ENCODE measurements at regions of chr18 and their contacts with region 1.

Region 1: DNA sequence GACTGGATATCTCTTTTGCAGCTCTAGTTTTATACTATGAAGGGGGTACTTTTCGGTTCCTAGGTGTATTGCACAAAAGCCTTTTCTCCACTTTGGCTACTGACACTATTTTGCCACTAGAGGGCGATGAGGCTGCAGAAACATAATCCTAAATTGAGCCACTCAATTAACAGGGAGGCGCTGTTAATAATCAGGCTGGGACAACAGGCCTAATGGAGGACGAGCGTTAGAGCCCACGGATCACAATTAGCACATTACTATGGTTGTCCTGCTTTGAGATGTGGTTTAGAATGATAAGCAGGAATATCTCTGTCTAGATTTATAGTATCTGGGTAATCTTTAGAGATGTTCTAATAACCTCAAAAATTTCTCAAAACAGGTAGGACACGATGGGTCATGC is 62.2 kb upstream of the PMAIP1 start:
- DNase-seq: peak; percentile 84
- H3K4me3 Mint-ChIP-seq: no peak overlapping the region
- H3K27ac Mint-ChIP-seq: no peak overlapping the region
- H3K4me1 Mint-ChIP-seq: peaks cover 6% of the 10 kb centered on the region
- H3K27me3 Mint-ChIP-seq: peaks cover 16% of the 10 kb centered on the region

Region 2: DNA sequence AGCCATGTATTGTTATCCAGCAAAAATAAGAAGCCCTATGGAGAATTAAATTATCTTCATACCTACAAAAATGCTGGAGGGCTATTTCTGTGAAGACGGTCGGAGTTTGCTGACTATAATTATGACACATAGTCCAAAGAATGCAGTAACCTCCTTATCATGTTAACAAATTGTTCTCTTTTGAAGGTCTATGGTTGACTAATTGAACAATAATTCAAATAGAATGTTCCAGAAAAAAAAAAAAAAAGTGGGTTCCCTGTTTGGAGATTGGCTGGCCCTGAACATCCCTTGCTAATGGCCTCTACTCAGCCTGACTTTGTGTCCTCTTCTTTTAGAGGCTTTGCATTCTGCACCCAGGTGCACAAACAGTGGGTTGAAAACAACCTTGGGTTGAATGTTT is 57.6 kb before region 1 on chr18:
- intact Hi-C with region 1: no loop called
- DNase-seq: no peak
- H3K4me3 Mint-ChIP-seq: no peak overlapping the region
- H3K27ac Mint-ChIP-seq: no peak overlapping the region
- H3K4me1 Mint-ChIP-seq: no peaks in the 10 kb centered on the region
- H3K27me3 Mint-ChIP-seq: peaks cover 2% of the 10 kb centered on the region

Region 3: GRCh38 chr18:59861963-59862819 is 24.6 kb after region 1 on chr18:
- intact Hi-C with region 1: no loop called
- DNase-seq: no peak
- H3K4me3 Mint-ChIP-seq: no peak overlapping the region
- H3K27ac Mint-ChIP-seq: no peak overlapping the region
- H3K4me1 Mint-ChIP-seq: no peaks in the 10 kb centered on the region
- H3K27me3 Mint-ChIP-seq: peaks cover 3% of the 10 kb centered on the region

Region 4: DNA sequence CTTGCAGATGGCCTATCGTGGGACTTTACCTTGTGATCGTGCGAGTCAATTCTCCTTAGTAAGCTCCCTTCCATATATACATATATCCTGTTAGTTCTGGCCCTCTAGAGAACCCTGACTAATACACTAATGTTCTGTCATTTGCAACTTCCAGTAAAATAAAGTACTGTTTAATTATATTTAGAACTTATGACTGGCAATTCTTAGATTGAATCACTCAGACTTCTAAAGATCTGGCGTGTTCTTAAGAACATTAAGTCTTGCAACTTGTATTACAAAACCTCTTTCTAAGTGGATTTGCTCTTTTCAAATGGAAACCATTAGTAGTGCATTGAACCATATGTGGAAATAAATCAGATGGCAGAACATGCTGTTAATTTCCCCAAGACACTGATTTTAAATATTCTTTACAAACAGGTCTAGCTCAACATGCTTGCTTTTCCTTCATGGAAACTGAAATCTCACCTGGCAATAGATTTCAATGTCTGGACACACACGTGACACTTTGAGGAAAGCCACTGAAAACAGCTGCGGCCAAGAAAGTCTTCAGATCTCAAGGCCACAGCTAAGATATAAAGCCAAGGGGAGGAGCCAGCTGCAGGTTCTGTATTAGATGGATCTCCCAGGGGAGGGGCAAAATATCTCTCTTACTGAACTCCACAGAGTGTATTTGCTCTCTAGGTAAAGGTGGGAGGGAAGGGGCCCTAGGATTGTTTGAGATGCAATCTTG is 112.8 kb after region 1 on chr18:
- intact Hi-C with region 1: loop called (anchors 5 kb)
- DNase-seq: no peak
- H3K4me3 Mint-ChIP-seq: no peak overlapping the region
- H3K27ac Mint-ChIP-seq: no peak overlapping the region
- H3K4me1 Mint-ChIP-seq: peaks cover 13% of the 10 kb centered on the region
- H3K27me3 Mint-ChIP-seq: peaks cover 6% of the 10 kb centered on the region

Region 5: GRCh38 chr18:60549338-60549960 is 711.9 kb after region 1 on chr18:
- intact Hi-C with region 1: loop called (anchors 2 kb)
- DNase-seq: peak; percentile 70
- H3K4me3 Mint-ChIP-seq: no peak overlapping the region
- H3K27ac Mint-ChIP-seq: no peak overlapping the region
- H3K4me1 Mint-ChIP-seq: no peaks in the 10 kb centered on the region
- H3K27me3 Mint-ChIP-seq: no peaks in the 10 kb centered on the region